Heart left ventricle (tissue), 16 donors: ENCODE measurements at regions of chr6 and their contacts with region 1.

Region 1: DNA sequence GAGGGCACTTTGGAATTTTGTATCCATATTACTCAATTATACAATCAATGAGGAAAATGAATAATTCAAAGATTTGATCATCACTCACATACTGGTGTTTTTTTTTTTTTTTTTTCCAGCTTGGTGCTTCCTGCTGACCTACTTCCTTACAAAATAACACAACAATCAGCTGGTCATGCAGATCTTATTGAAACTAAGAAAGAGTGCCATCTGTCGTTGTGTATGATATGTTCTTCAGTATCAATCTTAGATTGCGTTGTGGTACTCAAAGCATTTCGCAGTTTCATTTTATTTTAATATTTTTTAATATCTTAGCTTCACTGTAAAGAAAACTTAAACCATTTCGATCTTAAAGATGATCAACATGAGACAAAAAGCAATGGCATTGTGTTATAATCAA is 155.6 kb downstream of the OGFRL1 start:
- DNase-seq: no peak
- ATAC-seq: peak in 2 of 4 donors; percentile 53 to 64
- H3K4me3 ChIP-seq: peak overlapping the region in 4 of 12 donors; percentile 3 to 39 (median 12)
- H3K27ac ChIP-seq: no peak overlapping the region
- H3K4me1 ChIP-seq: peaks cover 0 to 17% (median 0%) of the 10 kb centered on the region in 12 donors
- H3K27me3 ChIP-seq: no peaks in the 10 kb centered on the region
- CTCF ChIP-seq: peak in 9 of 12 donors; percentile 9 to 50 (median 30)
- POLR2A ChIP-seq: no peak

Region 2: GRCh38 chr6:71510057-71510713 is 66.0 kb after region 1 on chr6:
- intact Hi-C with region 1: loop called in 2 of 10 experiments (anchors 5 to 10 kb)
- DNase-seq: peak; percentile 39 to 57 (median 47)
- ATAC-seq: peak; percentile 69 to 94 (median 82)
- H3K4me3 ChIP-seq: no peak overlapping the region
- H3K27ac ChIP-seq: no peak overlapping the region
- H3K4me1 ChIP-seq: peaks cover 0 to 18% (median 4%) of the 10 kb centered on the region in 12 donors
- H3K27me3 ChIP-seq: no peaks in the 10 kb centered on the region
- CTCF ChIP-seq: peak; percentile 36 to 80 (median 68)
- POLR2A ChIP-seq: no peak